ENCODE measurements at regions of chr17 and their contacts with region 1.

Region 1: DNA sequence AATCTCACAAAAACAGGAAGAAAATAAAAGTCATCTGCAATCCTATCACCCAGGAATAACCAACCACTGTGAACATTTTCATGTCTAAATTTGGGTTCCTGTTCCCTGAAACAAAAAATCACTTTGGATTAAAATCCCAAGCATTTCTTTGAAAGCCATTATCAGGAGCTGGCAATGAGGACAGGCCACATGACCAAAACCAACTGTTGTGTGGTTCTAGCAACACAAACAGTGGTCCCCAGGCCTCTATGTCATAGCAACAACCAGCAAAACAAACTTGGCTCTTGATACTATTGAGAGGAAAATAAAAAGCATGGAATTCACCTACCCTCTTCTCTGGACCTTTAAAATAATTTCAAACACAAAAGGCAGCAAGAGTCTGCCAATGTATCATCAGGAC is 252.5 kb downstream of the SLC39A11 start:
- DNase-seq: no peak
- H3K4me3 ChIP-seq: no peak overlapping the region
- H3K27ac ChIP-seq: no peak overlapping the region
- H3K4me1 ChIP-seq: no peaks in the 10 kb centered on the region
- H3K27me3 ChIP-seq: no peaks in the 10 kb centered on the region
- CTCF ChIP-seq: no peak

Region 2: GRCh38 chr17:72943826-72944689 is 104.0 kb after region 1 on chr17:
- CTCF ChIA-PET with region 1: no interaction called
- dilution Hi-C with region 1: loop called (anchors 5 kb)
- in situ Hi-C with region 1: no loop called
- intact Hi-C with region 1: no loop called
- DNase-seq: no peak
- H3K4me3 ChIP-seq: no peak overlapping the region
- H3K27ac ChIP-seq: no peak overlapping the region
- H3K4me1 ChIP-seq: no peaks in the 10 kb centered on the region
- H3K27me3 ChIP-seq: no peaks in the 10 kb centered on the region
- CTCF ChIP-seq: no peak